A549 (cell line): ENCODE measurements at regions of chr12 and their contacts with region 1.

Region 1: DNA sequence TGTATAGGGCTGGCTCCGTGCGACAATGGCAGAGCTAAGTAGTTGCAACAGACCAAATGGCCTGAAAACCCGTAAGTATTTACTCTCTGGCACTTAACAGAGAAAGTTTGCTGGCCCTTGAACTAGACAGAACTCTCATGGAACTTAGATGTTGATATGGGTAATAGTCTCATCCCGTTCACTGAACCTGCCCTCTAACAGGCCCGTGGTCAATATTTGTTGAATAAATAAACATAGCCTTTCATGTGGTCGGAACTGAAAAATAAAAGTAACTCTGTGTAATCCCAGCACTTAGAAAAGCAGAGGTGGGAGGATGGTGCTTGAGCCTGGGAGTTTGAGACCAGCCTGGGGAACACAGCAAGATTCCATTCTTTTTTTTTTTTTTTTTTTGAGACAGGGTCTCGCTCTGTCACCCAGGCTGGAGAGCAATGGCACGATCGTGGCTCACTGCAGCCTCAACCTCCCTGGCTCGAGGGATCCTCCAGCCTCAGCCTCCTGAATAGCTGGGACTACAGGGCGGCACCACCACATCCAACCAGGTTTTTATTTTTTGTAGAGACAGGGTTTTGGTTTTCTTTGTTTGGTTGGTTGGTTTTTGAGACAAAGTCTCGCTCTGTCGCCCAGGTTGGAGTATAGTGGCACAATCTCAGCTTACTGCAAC is 29.7 kb downstream of the KDM2B start:
- DNase-seq: no peak
- ATAC-seq: no peak
- H3K4me3 ChIP-seq: no peak overlapping the region
- H3K27ac ChIP-seq: no peak overlapping the region
- H3K4me1 ChIP-seq: no peaks in the 10 kb centered on the region
- CTCF ChIP-seq: no peak
- EP300 ChIP-seq: no peak
- POLR2A ChIP-seq: no peak
- RAD21 ChIP-seq: no peak

Region 2: GRCh38 chr12:120879102-120879501 is 672.0 kb before region 1 on chr12:
- CTCF ChIA-PET with region 1: no interaction called
- POLR2A ChIA-PET with region 1: no interaction called
- DNase-seq: no peak
- ATAC-seq: no peak
- H3K4me3 ChIP-seq: no peak overlapping the region
- H3K27ac ChIP-seq: no peak overlapping the region
- H3K4me1 ChIP-seq: peaks cover 3% of the 10 kb centered on the region; the same call in 1 of the 3 replicates
- CTCF ChIP-seq: no peak
- EP300 ChIP-seq: no peak
- POLR2A ChIP-seq: no peak
- RAD21 ChIP-seq: no peak

Region 3: DNA sequence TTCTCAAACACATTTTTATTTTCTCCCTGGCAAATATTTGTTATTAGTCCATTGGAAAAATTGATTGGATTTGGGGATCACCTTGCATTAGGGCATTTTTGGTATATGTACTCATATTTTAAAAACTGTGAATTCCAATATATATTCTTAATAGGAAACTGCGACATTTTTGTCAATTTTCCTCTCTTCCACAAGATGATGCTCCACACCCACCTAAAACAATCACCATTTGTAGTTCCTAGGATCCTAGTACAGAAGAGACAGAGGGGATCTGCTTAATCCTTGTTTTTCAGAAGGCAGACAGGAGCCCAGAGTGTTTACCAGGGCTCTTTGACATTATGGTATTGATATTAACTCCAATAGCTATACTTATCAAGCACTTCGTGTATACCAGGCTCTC is 489.3 kb before region 1 on chr12:
- CTCF ChIA-PET with region 1: no interaction called
- POLR2A ChIA-PET with region 1: no interaction called
- DNase-seq: peak in 1 of 2 experiments; percentile 33
- ATAC-seq: no peak
- H3K4me3 ChIP-seq: no peak overlapping the region
- H3K27ac ChIP-seq: no peak overlapping the region
- H3K4me1 ChIP-seq: peaks cover 6% of the 10 kb centered on the region; the same call in 1 of the 3 replicates
- CTCF ChIP-seq: peak; percentile 50
- EP300 ChIP-seq: no peak
- POLR2A ChIP-seq: no peak
- RAD21 ChIP-seq: peak; percentile 58 to 64; a peak in 4 of 5 replicates

Region 4: DNA sequence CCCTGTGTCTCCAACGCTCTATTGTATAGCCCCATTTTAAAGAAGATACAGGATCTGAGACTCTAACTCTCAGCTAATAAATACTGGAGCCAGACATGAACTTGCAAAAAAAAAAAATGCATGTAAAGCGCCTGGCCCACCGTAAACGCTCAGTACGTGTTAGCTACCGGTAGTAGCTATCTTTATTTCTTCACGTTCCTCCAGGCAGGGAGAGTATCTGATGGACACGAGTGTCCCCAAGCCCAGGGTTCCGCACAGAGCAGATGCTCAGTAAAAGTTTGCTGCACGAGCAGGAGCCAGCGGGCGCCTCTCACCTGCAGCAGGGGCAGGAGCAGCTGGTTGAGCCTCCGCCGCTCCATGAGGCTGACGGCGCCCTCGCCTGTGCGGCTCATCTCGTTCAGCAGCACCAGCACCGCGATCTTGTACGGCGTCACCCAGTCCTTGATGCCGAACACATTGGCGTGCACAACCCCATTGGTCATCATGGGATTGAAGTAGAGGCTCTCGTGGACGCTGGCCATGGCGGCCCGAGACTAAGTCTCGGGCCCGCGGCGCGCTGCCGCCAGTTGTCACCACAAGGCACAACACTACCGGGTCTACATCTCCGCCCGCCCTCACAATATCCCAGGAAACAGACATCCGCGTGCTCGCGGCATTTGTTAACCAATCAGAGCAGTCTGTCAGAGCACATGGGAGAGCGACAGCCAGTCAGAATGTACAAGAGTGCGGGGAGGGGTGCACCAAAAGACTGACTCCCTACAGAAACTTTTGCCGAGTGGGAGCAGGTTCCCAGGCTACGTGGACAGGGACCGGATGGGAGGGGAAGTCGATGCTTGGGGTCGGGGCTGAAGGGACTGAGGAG is 199.1 kb before region 1 on chr12 and contains the start of gene ANAPC5:
- CTCF ChIA-PET with region 1: no interaction called
- POLR2A ChIA-PET with region 1: no interaction called
- DNase-seq: peak; percentile 99 to 100
- ATAC-seq: peak; percentile 99
- H3K4me3 ChIP-seq: peak within 1 kb of the TSS; percentile 67
- H3K27ac ChIP-seq: peak within 1 kb of the TSS; percentile 81 to 91
- H3K4me1 ChIP-seq: peaks cover 11% of the 10 kb centered on the region; the same call in 2 of the 3 replicates
- CTCF ChIP-seq: no peak
- EP300 ChIP-seq: no peak
- POLR2A ChIP-seq: peak; percentile 86
- RAD21 ChIP-seq: no peak
- polyA plus RNA-seq, gene ANAPC5: 213 and 225 TPM in 2 replicates

Region 5: GRCh38 chr12:121470751-121471150 is 80.4 kb before region 1 on chr12:
- CTCF ChIA-PET with region 1: no interaction called
- POLR2A ChIA-PET with region 1: no interaction called
- DNase-seq: no peak
- ATAC-seq: no peak
- H3K4me3 ChIP-seq: no peak overlapping the region
- H3K27ac ChIP-seq: no peak overlapping the region
- H3K4me1 ChIP-seq: peaks cover 7% of the 10 kb centered on the region
- CTCF ChIP-seq: no peak
- EP300 ChIP-seq: no peak
- POLR2A ChIP-seq: no peak
- RAD21 ChIP-seq: no peak

Region 6: GRCh38 chr12:121525411-121525810 is 25.7 kb before region 1 on chr12:
- CTCF ChIA-PET with region 1: interaction called, 15 read pairs
- POLR2A ChIA-PET with region 1: no interaction called
- DNase-seq: no peak
- ATAC-seq: no peak
- H3K4me3 ChIP-seq: no peak overlapping the region
- H3K27ac ChIP-seq: no peak overlapping the region
- H3K4me1 ChIP-seq: peaks cover 2% of the 10 kb centered on the region
- CTCF ChIP-seq: no peak
- EP300 ChIP-seq: no peak
- POLR2A ChIP-seq: no peak
- RAD21 ChIP-seq: no peak

Region 7: GRCh38 chr12:121579981-121580868 is 29.1 kb after region 1 on chr12:
- CTCF ChIA-PET with region 1: interaction called, 49 read pairs
- POLR2A ChIA-PET with region 1: interaction called, 4 read pairs
- DNase-seq: peak; percentile 58 to 67
- ATAC-seq: peak; percentile 78 to 80
- H3K4me3 ChIP-seq: peak overlapping the region; percentile 54
- H3K27ac ChIP-seq: peak overlapping the region; percentile 77 to 94
- H3K4me1 ChIP-seq: peaks cover 49% of the 10 kb centered on the region
- CTCF ChIP-seq: no peak
- EP300 ChIP-seq: no peak
- POLR2A ChIP-seq: peak; percentile 47
- RAD21 ChIP-seq: no peak

Region 8: DNA sequence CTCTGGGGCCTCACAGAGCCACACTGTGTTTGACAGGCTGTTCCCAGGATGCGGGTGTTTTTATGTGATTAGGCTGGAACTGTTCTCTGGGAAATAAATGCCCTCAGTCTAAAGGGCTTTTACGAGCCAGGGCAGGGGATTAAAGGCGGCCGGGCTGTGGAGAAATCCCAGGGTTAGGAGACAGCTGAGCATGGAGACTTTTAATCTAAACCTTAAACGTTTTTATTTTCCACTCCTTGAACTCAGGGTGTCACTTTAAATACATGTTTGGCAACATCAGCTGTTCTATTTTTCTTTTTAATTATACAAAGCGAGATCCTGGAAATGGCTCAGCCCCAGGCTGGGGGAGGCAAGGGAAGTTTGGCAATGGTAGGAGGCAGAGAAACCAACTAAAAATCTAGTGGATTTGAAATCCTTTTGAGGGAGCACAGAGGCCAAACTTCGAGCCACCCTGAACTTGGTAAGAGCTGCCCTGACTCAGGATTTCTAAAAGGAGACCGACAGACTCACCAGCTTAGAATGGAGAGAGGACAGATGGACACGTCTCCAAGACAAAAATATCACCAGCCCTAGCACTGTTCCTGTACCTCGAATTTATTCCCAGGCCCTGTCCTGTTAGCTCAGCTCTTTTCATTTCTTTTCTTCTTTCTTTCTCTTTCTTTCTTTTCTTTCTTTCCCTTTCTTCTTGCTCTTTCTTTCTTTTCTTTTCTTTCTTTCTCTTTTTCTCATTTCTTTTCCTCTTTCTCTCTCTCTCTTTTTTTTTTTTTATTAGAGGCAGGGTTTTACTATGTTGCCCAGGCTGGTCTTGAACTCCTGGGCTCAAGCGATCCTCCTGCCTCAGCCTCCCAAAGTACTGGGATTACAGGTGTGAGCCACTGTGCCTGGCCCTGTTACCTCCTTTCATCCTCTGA is 59.4 kb after region 1 on chr12:
- CTCF ChIA-PET with region 1: interaction called, 12 read pairs
- POLR2A ChIA-PET with region 1: no interaction called
- DNase-seq: no peak
- ATAC-seq: peak; percentile 13 to 55; a peak in 2 of 6 replicates
- H3K4me3 ChIP-seq: no peak overlapping the region
- H3K27ac ChIP-seq: 0 out of 6 replicates have a peak overlapping the region, but pooled peaks of 1 of the 2 experiments have one; percentile 23
- H3K4me1 ChIP-seq: no peaks in the 10 kb centered on the region
- CTCF ChIP-seq: no peak
- EP300 ChIP-seq: no peak
- POLR2A ChIP-seq: no peak
- RAD21 ChIP-seq: no peak

Region 9: GRCh38 chr12:121657305-121658008 is 106.4 kb after region 1 on chr12:
- CTCF ChIA-PET with region 1: interaction called, 18 read pairs
- POLR2A ChIA-PET with region 1: no interaction called
- DNase-seq: no peak
- ATAC-seq: no peak
- H3K4me3 ChIP-seq: no peak overlapping the region
- H3K27ac ChIP-seq: no peak overlapping the region
- H3K4me1 ChIP-seq: no peaks in the 10 kb centered on the region
- CTCF ChIP-seq: no peak
- EP300 ChIP-seq: no peak
- POLR2A ChIP-seq: no peak
- RAD21 ChIP-seq: no peak